ENCODE measurements at regions of chr2 and their contacts with region 1.

Region 1: DNA sequence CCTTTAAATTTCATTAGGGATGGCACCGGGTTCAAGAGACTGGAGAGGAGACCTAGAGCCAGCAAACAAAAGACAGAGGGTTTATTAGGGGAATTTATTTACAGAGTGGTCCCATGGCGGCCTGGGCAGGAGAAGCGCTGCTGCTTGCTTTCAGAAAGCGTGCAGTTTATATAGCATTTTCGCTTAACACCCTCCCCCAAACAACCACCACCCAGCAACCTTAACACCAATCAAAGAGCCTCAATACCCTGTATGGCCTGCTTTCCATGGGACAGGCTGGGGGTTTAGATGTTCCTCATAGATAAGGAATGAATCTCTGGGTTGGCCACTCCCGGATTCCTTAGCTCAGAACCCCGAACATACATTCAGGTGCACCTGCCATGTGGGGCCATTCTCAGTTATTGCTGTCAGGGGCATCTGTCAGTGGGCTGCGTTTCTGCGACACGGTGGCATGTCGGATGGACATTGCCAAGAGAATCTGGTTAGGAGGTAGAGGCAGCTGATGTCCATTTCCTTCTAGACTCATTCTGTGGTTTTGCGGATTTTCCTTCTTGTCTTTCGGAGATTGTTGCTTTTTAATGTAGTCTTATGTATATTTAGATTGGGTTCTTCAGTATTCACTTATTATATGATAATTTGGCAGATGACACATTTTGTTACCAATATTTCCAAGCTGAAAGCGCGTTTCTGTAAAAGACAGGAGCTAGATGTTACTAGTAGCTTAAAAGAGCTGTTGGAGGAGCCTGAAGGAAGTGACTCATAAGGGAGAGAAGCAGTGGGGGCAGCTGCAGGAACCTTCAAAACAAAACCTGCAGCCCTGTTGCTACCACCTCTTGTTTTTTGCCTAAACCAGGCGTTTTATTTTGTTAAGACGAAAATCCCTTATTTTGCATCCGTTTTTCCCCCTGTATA is 7.2 kb downstream of the AGAP1 start:
- DNase-seq: peak in 1 of 7 donors; percentile 21
- H3K4me3 ChIP-seq: no peak overlapping the region
- H3K27ac ChIP-seq: no peak overlapping the region
- H3K4me1 ChIP-seq: peaks cover 8 to 20% of the 10 kb centered on the region in 2 donors
- H3K27me3 ChIP-seq: no peaks in the 10 kb centered on the region
- CTCF ChIP-seq: no peak
- POLR2A ChIP-seq: no peak

Region 2: GRCh38 chr2:235551965-235552364 is 50.9 kb after region 1 on chr2:
- intact Hi-C with region 1: loop called in 1 of 2 experiments (anchors 10 kb)
- DNase-seq: peak; percentile 32 to 80 (median 57)
- H3K4me3 ChIP-seq: no peak overlapping the region
- H3K27ac ChIP-seq: no peak overlapping the region
- H3K4me1 ChIP-seq: peaks cover 0 to 13% of the 10 kb centered on the region in 2 donors
- H3K27me3 ChIP-seq: no peaks in the 10 kb centered on the region
- CTCF ChIP-seq: peak in 5 of 6 experiments; percentile 41 to 55 (median 46)
- POLR2A ChIP-seq: no peak